Activated CD4-positive, alpha-beta T cell treated with anti-CD3 and anti-CD28 coated beads, Interleukin-2, amount 10 ng/mL, durations not matched to agents 24 days and 14 days (primary cell): ENCODE measurements at regions of chr11 and their contacts with region 1.

Region 1: GRCh38 chr11:5380740-5381342 is 2.8 kb upstream of the OR51M1 start:
- DNase-seq: peak; percentile 71
- H3K4me3 Mint-ChIP-seq: no peak overlapping the region
- H3K27ac Mint-ChIP-seq: no peak overlapping the region
- H3K4me1 Mint-ChIP-seq: no peaks in the 10 kb centered on the region
- H3K27me3 Mint-ChIP-seq: no peaks in the 10 kb centered on the region

Region 2: GRCh38 chr11:4626207-4627099 is 754.4 kb before region 1 on chr11:
- intact Hi-C with region 1: loop called (anchors 10 kb)
- DNase-seq: peak; percentile 90
- H3K4me3 Mint-ChIP-seq: no peak overlapping the region
- H3K27ac Mint-ChIP-seq: no peak overlapping the region
- H3K4me1 Mint-ChIP-seq: no peaks in the 10 kb centered on the region
- H3K27me3 Mint-ChIP-seq: peaks cover 34% of the 10 kb centered on the region

Region 3: GRCh38 chr11:5137014-5137413 is 243.8 kb before region 1 on chr11:
- intact Hi-C with region 1: no loop called
- DNase-seq: no peak
- H3K4me3 Mint-ChIP-seq: no peak overlapping the region
- H3K27ac Mint-ChIP-seq: no peak overlapping the region
- H3K4me1 Mint-ChIP-seq: no peaks in the 10 kb centered on the region
- H3K27me3 Mint-ChIP-seq: no peaks in the 10 kb centered on the region

Region 4: GRCh38 chr11:5171856-5172255 is 209.0 kb before region 1 on chr11:
- intact Hi-C with region 1: no loop called
- DNase-seq: no peak
- H3K4me3 Mint-ChIP-seq: no peak overlapping the region
- H3K27ac Mint-ChIP-seq: no peak overlapping the region
- H3K4me1 Mint-ChIP-seq: no peaks in the 10 kb centered on the region
- H3K27me3 Mint-ChIP-seq: no peaks in the 10 kb centered on the region